OCI-LY7 (cell line): ENCODE measurements at regions of chr4 and their contacts with region 1.

Region 1: GRCh38 chr4:56977321-56978012 is at the start of gene NOA1:
- DNase-seq: peak; percentile 99
- H3K4me3 ChIP-seq: peak within 1 kb of the TSS; percentile 98
- H3K27ac ChIP-seq: peak within 1 kb of the TSS; percentile 87
- H3K4me1 ChIP-seq: peaks cover 33% of the 10 kb centered on the region
- CTCF ChIP-seq: no peak
- total RNA-seq, gene NOA1: 20.2 TPM in 2 replicates

Region 2: DNA sequence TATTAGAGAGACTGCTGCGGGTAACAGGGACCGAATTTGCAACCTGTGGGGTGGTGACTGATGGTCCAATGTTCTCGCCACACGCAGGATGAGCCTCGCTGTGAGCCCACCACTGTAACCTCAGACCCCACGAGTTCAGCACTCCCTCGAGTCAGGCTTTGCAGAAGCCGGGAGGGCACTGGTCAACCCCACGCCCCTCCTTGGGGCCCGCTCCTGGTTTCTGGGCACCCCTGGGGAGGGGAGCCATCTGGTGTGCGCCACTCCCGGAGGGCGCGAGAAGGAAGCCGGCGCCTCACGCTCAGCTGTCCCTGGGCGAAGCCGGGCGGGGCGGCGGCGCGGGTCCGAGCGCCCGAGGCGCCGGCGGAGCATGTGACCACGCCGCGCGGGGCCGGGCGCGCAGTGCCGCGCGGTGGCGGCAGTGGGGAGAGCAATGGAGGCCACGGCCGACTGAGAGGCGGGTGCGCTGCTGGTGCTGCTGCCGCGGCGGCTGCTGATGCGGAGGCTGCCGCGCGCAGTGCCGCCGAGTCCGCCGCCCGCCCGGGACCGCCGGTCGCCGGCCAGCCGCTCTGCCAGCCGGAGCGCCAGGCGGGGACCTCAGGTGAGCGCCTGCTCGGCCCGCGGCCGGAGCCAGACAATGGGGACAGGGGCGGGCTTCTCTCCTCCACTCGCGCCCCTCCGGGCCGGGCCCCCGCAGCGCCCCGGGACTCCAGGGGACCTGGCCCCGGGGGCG is 928.6 kb before region 1 on chr4:
- CTCF ChIA-PET with region 1: no interaction called
- POLR2A ChIA-PET with region 1: no interaction called
- intact Hi-C with region 1: loop called (anchors 10 kb)
- DNase-seq: peak; percentile 89
- H3K4me3 ChIP-seq: peak overlapping the region; percentile 81
- H3K27ac ChIP-seq: peak overlapping the region; percentile 72
- H3K4me1 ChIP-seq: peaks cover 31% of the 10 kb centered on the region
- CTCF ChIP-seq: no peak; the same call in 1 of the 2 replicates

Region 3: GRCh38 chr4:56467284-56468096 is 510.0 kb before region 1 on chr4 and contains the start of gene SRP72:
- CTCF ChIA-PET with region 1: no interaction called
- POLR2A ChIA-PET with region 1: interaction called, 3 read pairs
- intact Hi-C with region 1: loop called (anchors 2 kb)
- DNase-seq: peak; percentile 90
- H3K4me3 ChIP-seq: peak within 1 kb of the TSS; percentile 99
- H3K27ac ChIP-seq: peak within 1 kb of the TSS; percentile 83
- H3K4me1 ChIP-seq: peaks cover 36% of the 10 kb centered on the region
- CTCF ChIP-seq: no peak
- total RNA-seq, gene SRP72: 53.5 and 65.8 TPM in 2 replicates

Region 4: GRCh38 chr4:56907489-56908205 is 69.8 kb before region 1 on chr4 and contains the start of gene REST:
- CTCF ChIA-PET with region 1: no interaction called
- POLR2A ChIA-PET with region 1: interaction called, 43 read pairs
- intact Hi-C with region 1: loop called (anchors 1 kb)
- DNase-seq: peak; percentile 86
- H3K4me3 ChIP-seq: peak within 1 kb of the TSS; percentile 84
- H3K27ac ChIP-seq: peak within 1 kb of the TSS; percentile 89
- H3K4me1 ChIP-seq: peaks cover 37% of the 10 kb centered on the region
- CTCF ChIP-seq: no peak
- total RNA-seq, gene REST: 26.7 and 27.3 TPM in 2 replicates

Region 5: DNA sequence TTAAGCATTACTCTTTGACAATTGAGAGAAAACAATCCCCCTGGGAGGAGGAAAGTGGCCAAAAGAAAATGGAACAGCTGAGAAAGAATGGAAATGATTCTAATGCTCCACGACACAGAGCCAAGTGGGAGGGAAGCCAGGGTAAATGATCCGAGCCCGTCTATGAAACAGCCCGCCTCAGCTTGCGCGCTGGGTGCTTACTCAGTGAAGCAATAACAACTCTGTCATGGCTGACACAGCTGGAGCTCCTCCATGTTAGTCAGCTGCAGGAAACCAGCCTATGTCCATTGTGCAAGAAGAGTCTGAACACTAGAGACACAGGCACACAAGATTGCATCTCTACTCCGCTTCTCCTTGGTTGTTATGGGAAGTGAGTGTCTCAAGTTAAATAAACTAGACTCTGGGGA is 19.4 kb before region 1 on chr4:
- CTCF ChIA-PET with region 1: no interaction called
- POLR2A ChIA-PET with region 1: interaction called, 53 read pairs
- intact Hi-C with region 1: no loop called
- DNase-seq: no peak
- H3K4me3 ChIP-seq: no peak overlapping the region
- H3K27ac ChIP-seq: no peak overlapping the region
- H3K4me1 ChIP-seq: no peaks in the 10 kb centered on the region
- CTCF ChIP-seq: no peak

Region 6: GRCh38 chr4:56990109-56990905 is 12.8 kb after region 1 on chr4:
- CTCF ChIA-PET with region 1: no interaction called
- POLR2A ChIA-PET with region 1: interaction called, 53 read pairs
- intact Hi-C with region 1: no loop called
- DNase-seq: no peak
- H3K4me3 ChIP-seq: no peak overlapping the region
- H3K27ac ChIP-seq: no peak overlapping the region
- H3K4me1 ChIP-seq: no peaks in the 10 kb centered on the region
- CTCF ChIP-seq: no peak

Region 7: DNA sequence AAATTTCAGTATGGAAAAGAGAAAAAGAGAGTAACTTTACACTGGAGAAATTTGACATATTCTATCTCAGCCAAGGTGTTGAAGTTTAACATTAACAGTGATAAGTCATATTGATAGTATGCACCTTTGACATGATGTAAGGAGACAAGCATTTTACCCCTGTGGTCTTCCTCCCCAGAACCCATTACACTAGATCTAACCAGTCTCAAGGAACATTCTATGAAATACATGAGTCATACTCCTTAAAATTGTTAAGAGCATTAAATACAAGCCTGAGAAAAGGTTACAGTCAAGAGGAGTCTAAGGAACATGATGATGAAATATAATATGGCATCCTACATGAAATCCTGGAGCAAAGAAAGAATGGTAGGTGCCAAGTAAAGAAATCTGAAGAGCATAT is 1284.1 kb after region 1 on chr4:
- CTCF ChIA-PET with region 1: no interaction called
- POLR2A ChIA-PET with region 1: no interaction called
- intact Hi-C with region 1: no loop called
- DNase-seq: no peak
- H3K4me3 ChIP-seq: no peak overlapping the region
- H3K27ac ChIP-seq: no peak overlapping the region
- H3K4me1 ChIP-seq: no peaks in the 10 kb centered on the region
- CTCF ChIP-seq: no peak